T-cell (primary cell): ENCODE measurements at regions of chr18 and their contacts with region 1.

Region 1: DNA sequence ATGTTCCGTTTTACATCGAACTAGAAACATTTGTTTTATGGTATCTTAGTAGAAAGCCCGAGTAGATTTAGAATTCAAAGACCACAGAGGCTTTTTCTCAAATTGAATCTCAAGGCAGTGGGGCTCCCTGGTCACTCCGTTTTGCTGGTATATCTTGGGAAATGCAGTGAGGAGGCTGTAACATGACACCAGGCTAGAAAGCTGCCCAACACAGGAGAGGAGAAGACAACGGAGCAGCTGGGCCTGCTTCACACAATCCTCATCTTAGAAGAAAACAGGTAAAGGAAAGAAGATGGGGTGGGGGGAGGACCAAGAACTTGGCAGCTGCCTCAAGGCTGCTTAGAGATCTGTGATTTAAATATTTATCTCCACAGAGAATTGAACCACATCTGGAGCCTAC is 38.3 kb upstream of the EPB41L3 start:
- DNase-seq: no peak
- ATAC-seq: no peak
- H3K4me3 ChIP-seq: no peak overlapping the region
- H3K4me3 Mint-ChIP-seq: no peak overlapping the region
- H3K27ac ChIP-seq: no peak overlapping the region
- H3K27ac Mint-ChIP-seq: no peak overlapping the region
- H3K4me1 ChIP-seq: no peaks in the 10 kb centered on the region
- H3K4me1 Mint-ChIP-seq: no peaks in the 10 kb centered on the region
- H3K27me3 ChIP-seq: no peaks in the 10 kb centered on the region
- H3K27me3 Mint-ChIP-seq: peaks cover 2 to 16% of the 10 kb centered on the region in 2 donors

Region 2: GRCh38 chr18:5622902-5623301 is 40.8 kb after region 1 on chr18:
- CTCF ChIA-PET with region 1: no interaction called
- POLR2A ChIA-PET with region 1: interaction called in 1 of 2 experiments, 10 read pairs
- DNase-seq: no peak
- ATAC-seq: no peak
- H3K4me3 ChIP-seq: no peak overlapping the region
- H3K4me3 Mint-ChIP-seq: no peak overlapping the region
- H3K27ac ChIP-seq: no peak overlapping the region
- H3K27ac Mint-ChIP-seq: no peak overlapping the region
- H3K4me1 ChIP-seq: peaks cover 0 to under 1% of the 10 kb centered on the region in 2 experiments
- H3K4me1 Mint-ChIP-seq: peaks cover 0 to 2% (median 2%) of the 10 kb centered on the region in 3 donors
- H3K27me3 ChIP-seq: peaks cover 10 to 19% of the 10 kb centered on the region in 2 experiments
- H3K27me3 Mint-ChIP-seq: peaks cover 10 to 23% of the 10 kb centered on the region in 2 donors